OCI-LY7 (cell line): ENCODE measurements at regions of chr14 and their contacts with region 1.

Region 1: GRCh38 chr14:23120541-23121251 is 1.6 kb upstream of the CEBPE start:
- DNase-seq: peak; percentile 91
- H3K4me3 ChIP-seq: peak overlapping the region; percentile 48
- H3K27ac ChIP-seq: peak overlapping the region; percentile 88
- H3K4me1 ChIP-seq: peaks cover 38% of the 10 kb centered on the region
- CTCF ChIP-seq: peak; percentile 100

Region 2: DNA sequence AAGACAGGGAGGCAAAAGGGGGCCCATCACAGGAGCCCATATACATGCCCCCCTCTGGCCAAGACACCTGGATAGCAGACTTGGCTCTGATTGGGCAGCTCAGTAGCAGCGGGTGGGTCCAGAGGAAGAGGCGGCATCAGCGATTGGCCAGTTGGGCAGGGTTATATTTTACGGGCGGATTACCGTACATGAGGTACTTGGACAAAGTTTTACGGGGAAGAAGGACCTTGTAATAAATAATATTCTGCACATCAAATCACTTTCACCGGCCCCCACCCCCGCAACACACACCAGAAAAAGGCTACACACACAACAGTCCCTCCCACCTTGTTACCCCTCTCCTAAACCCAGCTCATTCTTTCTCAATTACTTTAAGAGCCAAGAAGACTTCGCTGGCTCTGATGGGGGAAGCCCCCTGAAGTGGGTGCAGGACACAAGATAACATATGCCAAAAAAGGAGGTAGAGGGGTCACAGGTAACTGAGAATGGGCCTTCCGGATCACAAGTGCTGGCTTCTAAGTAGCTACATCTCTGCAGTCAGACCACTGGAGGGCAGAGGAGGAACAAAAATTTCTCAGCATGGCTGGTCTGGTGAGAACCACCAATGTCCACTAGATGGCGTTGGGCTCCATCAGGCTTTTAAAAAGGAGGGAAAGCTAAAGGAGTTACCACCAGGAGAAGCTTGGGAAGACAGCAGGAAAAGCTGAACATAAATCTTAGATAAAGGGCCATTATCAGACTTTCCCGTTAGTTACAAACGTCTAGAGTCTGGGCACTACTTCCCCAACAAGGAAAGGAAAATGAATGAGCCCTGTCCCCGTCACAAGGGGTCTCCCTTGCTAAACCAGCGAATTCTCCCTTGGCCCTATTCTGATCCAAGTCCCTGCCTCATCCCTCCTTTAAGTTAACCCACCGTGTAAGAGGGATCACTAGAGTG is 52.0 kb before region 1 on chr14:
- CTCF ChIA-PET with region 1: interaction called, 4 read pairs
- POLR2A ChIA-PET with region 1: no interaction called
- intact Hi-C with region 1: loop called (anchors 1 kb)
- DNase-seq: peak; percentile 87
- H3K4me3 ChIP-seq: no peak overlapping the region
- H3K27ac ChIP-seq: peak overlapping the region; percentile 25
- H3K4me1 ChIP-seq: peaks cover 29% of the 10 kb centered on the region
- CTCF ChIP-seq: peak; percentile 100

Region 3: DNA sequence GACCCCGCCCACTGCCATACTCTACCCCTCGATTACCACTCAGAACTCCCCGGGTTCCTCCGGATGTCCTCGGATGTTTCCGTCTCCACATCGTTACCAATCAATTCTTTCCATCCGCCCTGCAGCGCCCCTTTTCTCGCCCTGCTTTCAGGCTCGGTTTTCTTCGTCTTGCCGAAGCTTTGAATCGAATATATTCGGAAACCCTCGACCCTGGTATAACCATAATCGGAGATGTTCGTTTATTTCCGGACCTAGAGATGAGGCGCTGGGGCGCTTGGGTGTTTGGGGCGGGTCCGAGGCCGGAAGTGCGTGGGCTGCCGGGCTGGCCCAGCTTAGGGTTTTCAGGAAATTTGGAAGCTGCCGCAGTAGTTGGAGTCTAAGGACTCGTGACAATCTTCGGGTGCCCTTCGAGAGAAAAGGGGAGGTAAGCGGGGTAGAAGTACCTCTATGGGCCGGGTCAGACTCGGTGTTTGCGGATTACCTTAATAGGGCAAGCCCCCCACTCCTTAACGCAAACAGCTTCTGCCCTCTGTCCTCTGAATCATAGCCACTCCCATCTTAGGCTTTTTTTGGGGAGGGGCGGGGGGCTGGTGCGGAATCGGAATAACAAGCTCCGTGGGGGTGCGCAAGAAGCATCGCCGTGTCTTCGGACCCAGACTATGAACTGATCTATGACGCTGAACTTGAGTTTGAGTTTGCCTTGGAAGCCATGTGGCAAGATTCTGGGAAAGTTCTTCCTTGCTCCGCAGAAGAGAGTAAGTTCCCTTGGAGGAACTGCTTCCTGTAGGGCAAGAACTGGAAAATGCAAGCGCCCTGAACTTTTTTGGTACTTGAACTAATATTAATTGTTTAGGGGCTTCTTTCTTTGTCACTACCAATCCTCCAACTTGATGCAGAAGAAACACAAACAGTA is 25.2 kb before region 1 on chr14 and contains the start of gene C14orf119:
- CTCF ChIA-PET with region 1: interaction called, 10 read pairs
- POLR2A ChIA-PET with region 1: interaction called, 6 read pairs
- intact Hi-C with region 1: no loop called
- DNase-seq: peak; percentile 100
- H3K4me3 ChIP-seq: peak within 1 kb of the TSS; percentile 92
- H3K27ac ChIP-seq: peak within 1 kb of the TSS; percentile 81
- H3K4me1 ChIP-seq: peaks cover 23% of the 10 kb centered on the region
- CTCF ChIP-seq: no peak
- total RNA-seq, gene C14orf119: 25.9 and 44.5 TPM in 2 replicates

Region 4: GRCh38 chr14:23186913-23187654 is 66.4 kb after region 1 on chr14:
- CTCF ChIA-PET with region 1: interaction called, 69 read pairs
- POLR2A ChIA-PET with region 1: interaction called, 68 read pairs
- intact Hi-C with region 1: loop called (anchors 1 kb)
- DNase-seq: peak; percentile 65
- H3K4me3 ChIP-seq: no peak overlapping the region
- H3K27ac ChIP-seq: no peak overlapping the region
- H3K4me1 ChIP-seq: peaks cover 16% of the 10 kb centered on the region
- CTCF ChIP-seq: peak; percentile 92

Region 5: GRCh38 chr14:23269193-23269592 is 148.5 kb after region 1 on chr14:
- CTCF ChIA-PET with region 1: no interaction called
- POLR2A ChIA-PET with region 1: no interaction called
- intact Hi-C with region 1: loop called (anchors 1 kb)
- DNase-seq: no peak
- H3K4me3 ChIP-seq: no peak overlapping the region
- H3K27ac ChIP-seq: no peak overlapping the region
- H3K4me1 ChIP-seq: no peaks in the 10 kb centered on the region
- CTCF ChIP-seq: no peak

Region 6: GRCh38 chr14:23286020-23286905 is 165.6 kb after region 1 on chr14 and contains the start of gene HOMEZ:
- CTCF ChIA-PET with region 1: interaction called, 3 read pairs
- POLR2A ChIA-PET with region 1: interaction called, 4 read pairs
- intact Hi-C with region 1: loop called (anchors 5 kb)
- DNase-seq: peak; percentile 98
- H3K4me3 ChIP-seq: peak within 1 kb of the TSS; percentile 91
- H3K27ac ChIP-seq: peak within 1 kb of the TSS; percentile 28
- H3K4me1 ChIP-seq: peaks cover 13% of the 10 kb centered on the region
- CTCF ChIP-seq: peak; percentile 27; the same call in 1 of the 2 replicates
- total RNA-seq, gene HOMEZ: 6.3 and 7.1 TPM in 2 replicates

Region 7: DNA sequence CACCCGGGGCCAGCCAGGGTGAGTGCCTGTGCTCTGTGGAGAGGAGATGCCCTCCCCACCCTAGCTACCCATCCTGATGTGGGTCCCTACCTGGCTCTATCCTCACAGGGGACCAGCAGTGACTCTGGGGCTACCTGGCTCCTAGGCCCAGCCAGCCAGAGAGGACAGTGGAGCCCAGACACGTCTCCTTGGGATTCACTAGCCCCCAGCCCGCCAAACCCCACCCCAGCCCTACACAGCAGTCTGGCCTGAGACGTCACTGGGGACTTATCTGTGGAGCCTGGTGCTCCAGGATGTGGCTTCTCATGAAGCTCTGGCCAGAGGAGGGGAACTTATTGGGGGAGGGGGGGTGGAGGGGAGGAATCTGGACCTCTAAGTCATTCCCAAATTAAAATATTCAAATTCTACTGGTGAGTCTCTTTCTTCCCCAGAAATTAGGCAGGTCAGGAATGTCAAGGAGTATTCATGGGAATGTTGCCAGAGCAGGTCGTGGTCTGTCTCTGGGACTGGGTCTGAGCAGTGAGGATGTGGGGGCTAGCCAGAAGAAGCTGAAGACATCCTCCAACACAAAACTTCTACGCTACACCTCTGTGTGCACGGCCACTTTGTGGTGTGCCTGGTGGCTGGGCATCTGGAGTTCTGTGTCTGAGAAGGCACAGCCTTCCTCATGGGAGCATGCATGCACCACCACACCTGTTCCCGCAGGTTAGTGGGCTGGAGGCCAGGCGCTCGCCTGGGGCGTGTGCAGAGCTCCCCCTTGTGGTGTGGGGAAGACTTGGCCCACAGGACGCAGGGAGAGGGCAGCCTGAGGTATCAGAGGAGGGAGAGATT is 258.9 kb after region 1 on chr14:
- CTCF ChIA-PET with region 1: interaction called, 7 read pairs
- POLR2A ChIA-PET with region 1: no interaction called
- intact Hi-C with region 1: loop called (anchors 5 kb)
- DNase-seq: peak; percentile 66
- H3K4me3 ChIP-seq: no peak overlapping the region
- H3K27ac ChIP-seq: no peak overlapping the region
- H3K4me1 ChIP-seq: no peaks in the 10 kb centered on the region
- CTCF ChIP-seq: peak; percentile 89